Mammary epithelial cell (primary cell): ENCODE measurements at regions of chr2 and their contacts with region 1.

Region 1: DNA sequence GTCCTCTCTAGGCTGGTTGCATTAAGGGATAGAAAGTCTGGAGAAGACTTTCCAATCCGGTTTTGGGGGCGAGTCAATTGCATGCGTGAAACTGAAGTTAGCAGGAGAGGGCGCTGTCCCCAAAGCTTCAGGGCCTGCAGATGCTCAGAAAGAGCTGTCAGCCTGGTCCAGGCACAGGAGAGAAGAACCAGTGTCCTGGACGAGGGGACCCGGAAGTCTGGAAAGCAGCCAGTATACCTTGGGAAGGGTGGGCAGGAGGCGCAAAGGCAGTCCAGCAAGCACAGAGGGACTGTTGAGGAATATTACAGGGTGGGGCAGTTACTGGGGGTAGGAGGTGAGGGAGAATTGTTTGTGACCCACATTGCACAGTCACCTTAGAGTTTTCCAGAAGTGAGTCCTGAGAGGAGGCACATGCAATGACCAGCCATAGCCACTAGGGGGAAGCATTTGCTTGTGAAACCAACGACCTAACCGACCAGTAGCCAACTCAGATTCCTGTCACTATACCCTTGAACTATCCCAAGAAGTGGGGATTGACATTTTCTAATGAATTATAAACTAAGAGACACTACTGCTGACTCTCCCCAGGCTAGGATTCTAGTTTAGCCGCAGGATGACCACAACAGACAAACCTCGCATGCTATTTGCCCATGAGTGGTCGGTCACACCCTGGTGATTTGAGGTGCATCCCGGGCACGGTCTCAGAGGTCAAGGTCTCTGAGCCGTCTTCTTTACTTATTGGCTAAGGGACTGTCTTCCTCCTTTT is 172.8 kb downstream of the RDH14 start:
- DNase-seq: peak; percentile 51
- H3K4me3 ChIP-seq: no peak overlapping the region
- H3K27ac ChIP-seq: no peak overlapping the region
- H3K4me1 ChIP-seq: no peaks in the 10 kb centered on the region
- H3K27me3 ChIP-seq: no peaks in the 10 kb centered on the region
- CTCF ChIP-seq: peak; percentile 93 to 95

Region 2: DNA sequence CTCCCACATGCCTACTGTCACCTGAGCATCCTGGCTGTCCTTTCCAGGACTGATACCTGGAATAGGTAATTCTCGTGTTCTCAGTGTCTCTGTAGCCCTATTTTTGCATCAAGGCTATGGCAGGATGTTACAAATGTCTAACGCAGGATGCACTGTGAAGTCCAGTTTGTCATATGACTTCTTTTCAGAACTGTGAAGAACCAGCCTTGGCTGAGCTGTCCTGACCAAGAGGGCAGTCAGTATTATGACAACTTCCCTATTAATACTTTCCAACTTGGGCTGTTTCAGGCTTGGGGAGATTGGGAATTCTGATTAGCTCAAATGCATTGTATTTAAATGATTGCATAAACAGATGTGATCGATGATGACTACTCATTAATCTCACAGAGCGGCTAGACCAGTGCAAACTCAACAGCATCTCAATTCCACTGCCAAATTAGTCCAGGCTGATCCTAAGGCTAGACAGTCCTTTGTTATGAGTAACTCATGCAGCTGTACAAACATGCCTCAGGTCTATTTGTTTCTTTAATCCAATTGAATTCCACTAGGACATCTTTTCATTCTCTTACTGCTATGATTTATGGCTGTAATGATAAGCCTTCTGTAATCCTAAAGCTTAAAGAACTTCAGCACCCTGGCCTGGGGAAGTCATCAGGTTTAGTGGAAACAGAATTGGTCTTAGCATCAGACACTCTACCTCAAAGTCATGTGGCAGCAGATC is 177.5 kb before region 1 on chr2:
- CTCF ChIA-PET with region 1: no interaction called
- dilution Hi-C with region 1: no loop called
- in situ Hi-C with region 1: loop called in 1 of 2 experiments (anchors 25 kb)
- intact Hi-C with region 1: no loop called
- DNase-seq: peak; percentile 88
- H3K4me3 ChIP-seq: no peak overlapping the region
- H3K27ac ChIP-seq: no peak overlapping the region
- H3K4me1 ChIP-seq: peaks cover 16% of the 10 kb centered on the region
- H3K27me3 ChIP-seq: no peaks in the 10 kb centered on the region
- CTCF ChIP-seq: no peak

Region 3: DNA sequence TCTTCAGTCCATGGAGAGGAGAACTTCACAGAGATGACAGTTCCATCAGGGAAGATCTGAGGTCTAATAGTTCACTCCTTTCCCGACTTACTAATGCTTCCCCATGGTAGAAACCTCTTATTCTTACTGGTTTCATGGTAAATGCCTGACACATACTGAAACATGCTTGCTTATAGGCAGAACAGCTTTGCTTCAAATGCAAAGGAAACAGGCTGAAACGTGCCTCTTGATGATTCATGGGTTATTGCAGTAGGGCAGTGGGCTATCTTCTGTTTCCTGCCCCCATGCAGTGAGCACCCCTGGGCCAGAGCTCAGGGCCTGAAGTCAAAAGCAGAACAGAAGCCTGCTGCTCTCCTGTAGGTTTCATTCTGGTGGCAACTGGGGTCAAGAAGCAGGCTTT is 50.6 kb before region 1 on chr2:
- CTCF ChIA-PET with region 1: no interaction called
- dilution Hi-C with region 1: no loop called
- in situ Hi-C with region 1: no loop called
- intact Hi-C with region 1: no loop called
- DNase-seq: peak; percentile 78
- H3K4me3 ChIP-seq: no peak overlapping the region
- H3K27ac ChIP-seq: no peak overlapping the region
- H3K4me1 ChIP-seq: peaks cover 10% of the 10 kb centered on the region
- H3K27me3 ChIP-seq: no peaks in the 10 kb centered on the region
- CTCF ChIP-seq: no peak

Region 4: DNA sequence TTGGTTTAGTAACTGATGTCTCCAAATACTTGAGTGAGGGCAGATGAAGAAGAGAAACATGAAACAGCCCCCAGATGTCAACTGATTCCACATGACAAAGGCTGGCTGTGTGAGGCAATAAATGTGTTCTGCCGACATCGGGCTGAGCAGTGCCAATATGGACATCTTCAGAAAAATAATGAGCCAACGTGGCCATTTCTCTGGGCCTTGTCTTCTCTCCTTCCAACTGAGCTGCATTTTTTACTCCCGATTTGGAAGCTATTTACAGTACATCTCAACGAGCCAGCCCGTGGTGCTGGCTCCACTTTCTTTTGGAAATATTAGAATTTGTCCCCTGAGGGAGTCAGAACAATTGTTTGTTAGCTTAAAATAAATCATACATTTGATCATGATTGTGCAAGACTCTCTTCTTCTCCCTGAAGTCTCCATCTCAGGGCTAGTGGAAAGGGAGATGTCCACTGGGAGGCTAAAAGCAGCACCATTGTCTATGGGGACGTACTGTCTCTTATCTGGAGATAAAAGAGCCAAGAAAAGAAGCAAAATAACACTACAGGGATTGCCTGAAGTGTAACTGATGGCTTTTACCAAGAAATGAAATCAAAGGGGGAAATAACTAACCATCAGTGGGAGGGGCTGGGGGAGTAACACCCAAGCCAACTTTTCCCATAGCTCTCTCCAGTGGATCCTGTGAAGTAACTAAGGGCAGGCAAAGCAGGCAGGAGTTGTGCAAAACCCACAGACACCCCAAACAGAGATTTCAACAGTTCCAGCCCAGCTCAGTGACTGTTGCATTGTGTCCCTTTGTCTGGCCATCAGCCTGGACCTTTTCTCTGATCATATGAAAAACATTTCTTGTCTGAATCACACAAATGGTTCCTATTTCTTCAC is 58.1 kb after region 1 on chr2:
- CTCF ChIA-PET with region 1: no interaction called
- dilution Hi-C with region 1: no loop called
- in situ Hi-C with region 1: no loop called
- intact Hi-C with region 1: no loop called
- DNase-seq: no peak
- H3K4me3 ChIP-seq: no peak overlapping the region
- H3K27ac ChIP-seq: no peak overlapping the region
- H3K4me1 ChIP-seq: no peaks in the 10 kb centered on the region
- H3K27me3 ChIP-seq: peaks cover 9% of the 10 kb centered on the region
- CTCF ChIP-seq: no peak